Kidney (tissue), 22 donors: ENCODE measurements at regions of chr15 and their contacts with region 1.

Region 1: DNA sequence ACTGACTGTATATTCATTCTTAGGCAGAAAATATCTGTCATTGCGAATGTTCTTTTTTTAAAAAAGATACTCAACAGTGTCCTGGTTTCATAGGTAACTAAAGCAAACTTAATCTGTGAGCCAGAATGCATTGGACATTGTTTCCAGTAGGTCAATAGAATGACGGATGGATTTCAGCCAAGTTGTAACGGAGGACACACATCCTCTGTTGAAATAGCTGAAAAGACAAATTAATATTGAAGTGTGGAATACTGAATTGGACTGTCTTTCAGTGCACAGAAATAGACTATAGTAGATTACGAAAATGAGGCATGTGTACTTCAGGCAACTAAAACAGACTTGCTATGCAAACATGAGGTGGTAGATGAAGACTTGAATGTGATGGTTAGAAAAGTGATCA is 461.6 kb downstream of the WDR72 start:
- DNase-seq: no peak
- H3K4me3 ChIP-seq: no peak overlapping the region
- H3K27ac ChIP-seq: no peak overlapping the region
- H3K4me1 ChIP-seq: no peaks in the 10 kb centered on the region
- H3K27me3 ChIP-seq: no peaks in the 10 kb centered on the region
- CTCF ChIP-seq: no peak

Region 2: DNA sequence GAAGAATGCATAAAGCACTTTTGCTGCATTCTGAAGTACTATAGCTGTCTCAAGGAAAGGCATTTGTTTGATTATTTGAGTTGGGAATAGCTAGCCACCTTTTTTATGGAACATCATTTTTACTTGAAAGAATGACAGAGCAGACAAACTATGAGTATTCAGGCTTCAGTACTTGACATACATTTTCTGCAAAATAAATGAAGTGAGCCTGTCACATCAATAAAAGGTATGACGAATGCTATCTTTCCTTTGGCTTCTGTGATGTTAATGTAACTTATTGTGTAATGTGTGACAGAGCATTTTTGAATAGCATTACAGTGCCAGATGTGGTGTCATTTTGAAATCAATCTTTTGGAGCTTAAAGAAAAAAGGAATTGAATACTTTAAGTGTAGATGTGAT is 67.4 kb before region 1 on chr15:
- intact Hi-C with region 1: loop called (anchors 10 kb)
- DNase-seq: no peak
- H3K4me3 ChIP-seq: no peak overlapping the region
- H3K27ac ChIP-seq: no peak overlapping the region
- H3K4me1 ChIP-seq: no peaks in the 10 kb centered on the region
- H3K27me3 ChIP-seq: no peaks in the 10 kb centered on the region
- CTCF ChIP-seq: no peak